ENCODE measurements at regions of chr5 and their contacts with region 1.

Region 1: DNA sequence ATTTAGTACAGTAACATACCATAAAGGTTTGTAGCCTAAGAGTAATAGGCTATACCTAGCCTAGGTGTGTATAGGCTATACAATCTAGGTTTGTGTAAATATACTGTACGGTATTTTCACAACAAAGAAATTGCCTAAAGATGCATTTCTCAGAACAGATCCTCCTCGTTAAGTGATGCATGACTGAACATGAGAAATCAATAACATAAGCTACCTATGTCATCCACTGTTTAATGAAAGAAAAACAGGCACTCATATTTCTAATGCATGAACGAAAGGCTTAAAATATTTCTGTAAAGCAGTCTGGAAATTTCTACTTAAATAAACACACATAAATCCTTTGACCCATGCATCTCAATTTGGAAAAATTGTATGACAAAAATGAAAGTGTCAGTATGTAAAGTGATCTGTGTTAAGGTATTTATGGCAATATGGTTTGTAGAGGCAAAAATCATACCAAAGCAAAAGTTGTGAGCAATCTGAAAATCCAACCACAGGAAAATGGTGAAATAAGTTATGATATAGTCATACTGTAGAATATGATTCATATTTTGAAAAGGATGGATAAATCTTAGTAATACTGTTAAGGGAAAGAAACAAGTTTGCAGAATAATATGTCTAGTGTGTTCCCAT is 399.2 kb upstream of the GRAMD2B start:
- DNase-seq: no peak
- H3K4me3 Mint-ChIP-seq: no peak overlapping the region
- H3K27ac Mint-ChIP-seq: no peak overlapping the region
- H3K4me1 Mint-ChIP-seq: no peaks in the 10 kb centered on the region
- H3K27me3 Mint-ChIP-seq: no peaks in the 10 kb centered on the region

Region 2: GRCh38 chr5:126044111-126044668 is 20.2 kb after region 1 on chr5:
- intact Hi-C with region 1: loop called (anchors 2 kb)
- DNase-seq: no peak
- H3K4me3 Mint-ChIP-seq: no peak overlapping the region
- H3K27ac Mint-ChIP-seq: no peak overlapping the region
- H3K4me1 Mint-ChIP-seq: peaks cover 2% of the 10 kb centered on the region
- H3K27me3 Mint-ChIP-seq: no peaks in the 10 kb centered on the region

Region 3: DNA sequence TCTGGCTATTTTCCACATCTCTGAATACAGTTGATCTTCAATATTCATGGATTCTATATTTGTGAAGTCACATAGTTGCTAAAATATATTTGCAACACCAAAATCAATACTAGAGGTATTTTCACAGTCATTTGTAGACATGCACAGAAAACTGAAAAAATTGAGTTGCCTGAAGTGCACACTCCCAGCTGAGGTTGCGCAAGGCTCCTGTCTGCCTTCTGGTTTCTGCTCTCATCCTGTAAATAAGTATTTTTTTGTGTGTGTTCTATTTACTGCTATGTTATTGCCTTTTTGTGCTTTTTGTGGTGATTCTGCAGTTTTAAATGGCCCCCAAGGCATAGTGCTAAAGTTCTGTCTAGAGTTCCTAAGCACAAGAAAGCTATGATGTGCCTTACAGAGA is 28.1 kb after region 1 on chr5:
- intact Hi-C with region 1: loop called (anchors 2 kb)
- DNase-seq: no peak
- H3K4me3 Mint-ChIP-seq: no peak overlapping the region
- H3K27ac Mint-ChIP-seq: peak overlapping the region; percentile 34
- H3K4me1 Mint-ChIP-seq: peaks cover 19% of the 10 kb centered on the region
- H3K27me3 Mint-ChIP-seq: no peaks in the 10 kb centered on the region